AG04449 (cell line): ENCODE measurements at regions of chr16 and their contacts with region 1.

Region 1: GRCh38 chr16:28974437-28975157 is at the start of gene SPNS1:
- DNase-seq: peak; percentile 77
- H3K4me3 ChIP-seq: peak within 1 kb of the TSS; percentile 99
- CTCF ChIP-seq: no peak

Region 2: GRCh38 chr16:28958836-28959235 is 15.8 kb before region 1 on chr16:
- CTCF ChIA-PET with region 1: interaction called, 18 read pairs
- POLR2A ChIA-PET with region 1: no interaction called
- DNase-seq: no peak
- H3K4me3 ChIP-seq: no peak overlapping the region
- CTCF ChIP-seq: no peak

Region 3: DNA sequence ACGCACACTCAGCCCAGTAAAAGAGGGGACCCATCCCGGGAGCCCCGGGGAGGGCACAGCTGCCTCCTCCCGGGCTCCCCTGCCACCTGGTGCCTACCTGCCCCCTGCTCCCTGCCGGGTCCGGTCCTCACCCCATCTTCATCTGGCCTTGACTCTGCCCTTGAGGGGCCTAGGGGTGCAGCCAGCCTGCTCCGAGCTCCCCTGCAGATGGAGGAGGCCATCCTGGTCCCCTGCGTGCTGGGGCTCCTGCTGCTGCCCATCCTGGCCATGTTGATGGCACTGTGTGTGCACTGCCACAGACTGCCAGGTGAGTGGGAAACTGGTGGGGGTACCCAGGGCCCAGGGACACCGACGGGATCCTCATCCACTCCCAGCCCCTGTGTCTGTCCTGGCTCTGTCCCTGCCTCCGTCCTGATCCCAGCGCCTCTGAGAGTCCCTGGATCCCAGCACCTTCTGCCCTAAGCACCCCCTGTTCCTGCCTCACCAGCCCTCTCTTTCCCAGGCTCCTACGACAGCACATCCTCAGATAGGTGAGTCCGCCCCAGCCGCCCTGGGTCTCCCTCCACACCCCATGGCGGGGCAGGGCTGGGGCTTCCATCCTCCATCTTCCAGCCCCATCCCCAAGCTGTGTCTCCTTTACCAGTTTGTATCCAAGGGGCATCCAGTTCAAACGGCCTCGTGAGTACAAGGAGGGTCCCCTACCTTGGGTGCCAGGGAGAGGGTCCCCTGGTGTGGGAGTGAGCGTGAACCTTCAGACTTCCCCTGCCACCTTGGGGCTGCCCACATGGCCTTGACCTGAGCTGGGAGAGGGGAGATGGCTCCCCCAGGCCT is 10.8 kb after region 1 on chr16:
- CTCF ChIA-PET with region 1: interaction called, 10 read pairs
- POLR2A ChIA-PET with region 1: interaction called, 3 read pairs
- DNase-seq: no peak
- H3K4me3 ChIP-seq: no peak overlapping the region
- CTCF ChIP-seq: no peak

Region 4: GRCh38 chr16:29107299-29107698 is 132.7 kb after region 1 on chr16:
- CTCF ChIA-PET with region 1: no interaction called
- POLR2A ChIA-PET with region 1: no interaction called
- DNase-seq: no peak
- H3K4me3 ChIP-seq: no peak overlapping the region
- CTCF ChIP-seq: no peak